ENCODE measurements at regions of chr4 and their contacts with region 1.

Region 1: GRCh38 chr4:33465565-33465964 is 2745.4 kb downstream of the PCDH7 start:
- DNase-seq: no peak
- ATAC-seq: no peak
- H3K4me3 ChIP-seq: no peak overlapping the region
- H3K4me3 Mint-ChIP-seq: no peak overlapping the region
- H3K27ac ChIP-seq: no peak overlapping the region
- H3K27ac Mint-ChIP-seq: no peak overlapping the region
- H3K4me1 ChIP-seq: no peaks in the 10 kb centered on the region
- H3K4me1 Mint-ChIP-seq: no peaks in the 10 kb centered on the region
- H3K27me3 ChIP-seq: no peaks in the 10 kb centered on the region
- H3K27me3 Mint-ChIP-seq: no peaks in the 10 kb centered on the region
- CTCF ChIP-seq: no peak

Region 2: GRCh38 chr4:33518852-33519251 is 53.3 kb after region 1 on chr4:
- CTCF ChIA-PET with region 1: no interaction called
- POLR2A ChIA-PET with region 1: no interaction called
- intact Hi-C with region 1: loop called in 1 of 2 experiments (anchors 2 kb)
- DNase-seq: no peak
- ATAC-seq: no peak
- H3K4me3 ChIP-seq: no peak overlapping the region
- H3K4me3 Mint-ChIP-seq: no peak overlapping the region
- H3K27ac ChIP-seq: no peak overlapping the region
- H3K27ac Mint-ChIP-seq: no peak overlapping the region
- H3K4me1 ChIP-seq: no peaks in the 10 kb centered on the region
- H3K4me1 Mint-ChIP-seq: no peaks in the 10 kb centered on the region
- H3K27me3 ChIP-seq: no peaks in the 10 kb centered on the region
- H3K27me3 Mint-ChIP-seq: no peaks in the 10 kb centered on the region
- CTCF ChIP-seq: no peak